ENCODE measurements at regions of chr3 and their contacts with region 1.

Region 1: GRCh38 chr3:49093853-49094767 is at the start of gene QRICH1:
- DNase-seq: peak; percentile 91 to 96
- H3K4me3 ChIP-seq: peak within 1 kb of the TSS; percentile 80 to 99 (median 89)
- H3K27ac ChIP-seq: peak within 1 kb of the TSS; percentile 88
- H3K4me1 ChIP-seq: no peaks in the 10 kb centered on the region; a peak in 1 of 7 replicates
- H3K27me3 ChIP-seq: no peaks in the 10 kb centered on the region
- CTCF ChIP-seq: peak; percentile 61 to 78 (median 65)
- EP300 ChIP-seq: no peak
- POLR2A ChIP-seq: peak; percentile 87 to 89
- RAD21 ChIP-seq: peak; percentile 47 to 59; a peak in 3 of 4 replicates
- total RNA-seq, gene QRICH1: 123 and 142 TPM in 2 replicates

Region 2: DNA sequence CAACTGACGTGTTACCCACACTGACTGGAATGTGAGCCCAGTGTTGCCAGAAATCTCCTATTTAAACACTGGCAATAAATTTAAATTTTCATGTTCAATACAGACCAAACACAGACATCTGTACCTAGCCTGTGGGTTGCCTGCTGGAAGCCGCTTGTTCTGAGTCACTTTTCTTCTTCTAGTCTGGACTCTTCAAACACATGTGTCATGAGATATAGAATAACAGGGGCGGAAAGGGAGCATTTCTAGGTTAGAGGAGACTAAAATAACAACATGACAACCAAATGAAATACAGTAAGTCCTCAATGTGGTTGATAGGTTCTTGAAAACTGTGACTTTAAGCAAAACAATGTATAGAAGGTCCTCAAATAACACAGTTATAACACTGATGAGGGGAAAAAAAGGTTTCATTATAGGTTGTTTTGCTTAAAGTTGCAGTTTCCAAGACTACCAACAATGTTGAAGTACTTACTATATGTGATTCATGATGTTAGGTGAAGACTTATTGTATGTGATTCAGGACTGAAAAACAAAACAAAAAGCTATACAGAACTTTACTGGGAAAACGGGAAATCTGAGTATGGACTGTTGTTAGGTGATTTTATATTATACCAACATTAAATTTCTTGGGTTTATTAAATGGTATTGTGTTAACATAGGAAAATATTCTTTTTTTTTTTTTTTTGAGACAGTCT is 309.5 kb before region 1 on chr3:
- CTCF ChIA-PET with region 1: no interaction called
- POLR2A ChIA-PET with region 1: no interaction called
- DNase-seq: no peak
- H3K4me3 ChIP-seq: no peak overlapping the region
- H3K27ac ChIP-seq: no peak overlapping the region
- H3K4me1 ChIP-seq: no peaks in the 10 kb centered on the region
- H3K27me3 ChIP-seq: no peaks in the 10 kb centered on the region
- CTCF ChIP-seq: no peak
- EP300 ChIP-seq: no peak
- POLR2A ChIP-seq: no peak
- RAD21 ChIP-seq: no peak

Region 3: DNA sequence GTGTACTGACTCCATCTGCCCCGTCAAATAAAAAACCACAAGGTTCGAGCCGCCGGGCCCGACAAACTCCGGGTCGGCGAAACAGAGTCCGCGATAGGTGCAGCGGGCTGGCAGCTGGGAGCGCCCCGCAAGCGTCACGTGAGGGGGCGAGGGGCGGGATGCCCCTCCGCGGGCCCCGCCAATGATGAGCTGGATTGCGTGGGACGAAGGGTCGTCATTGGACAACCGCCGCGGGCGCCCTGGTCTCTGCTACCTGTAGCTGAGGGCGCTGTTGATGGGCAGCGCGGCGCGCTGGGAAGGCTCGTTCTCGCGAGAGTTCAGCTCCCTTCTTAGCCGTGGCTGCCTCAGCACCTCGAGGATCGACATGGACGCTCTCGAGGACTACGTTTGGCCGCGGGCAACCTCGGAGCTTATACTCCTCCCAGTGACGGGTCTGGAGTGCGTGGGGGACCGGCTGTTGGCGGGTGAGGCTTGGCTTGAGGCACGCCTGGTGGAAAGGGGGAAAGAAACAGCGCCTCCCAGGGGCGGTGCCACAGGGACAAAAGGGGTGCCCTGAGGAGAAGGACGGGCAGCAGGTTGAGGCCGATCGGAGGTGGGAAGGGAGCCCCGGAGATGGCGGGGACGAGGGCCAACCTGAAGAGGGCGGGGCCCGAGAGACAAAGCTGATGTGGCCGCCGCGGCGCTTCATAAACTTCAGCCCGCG is 86.9 kb before region 1 on chr3 and contains the start of gene WDR6:
- CTCF ChIA-PET with region 1: no interaction called
- POLR2A ChIA-PET with region 1: interaction called, 141 read pairs
- DNase-seq: peak; percentile 96
- H3K4me3 ChIP-seq: peak within 1 kb of the TSS; percentile 66 to 94 (median 92)
- H3K27ac ChIP-seq: peak within 1 kb of the TSS; percentile 99
- H3K4me1 ChIP-seq: peaks cover 0 to 12% (median 6%) of the 10 kb centered on the region in 4 experiments; a peak in 5 of 7 replicates
- H3K27me3 ChIP-seq: no peaks in the 10 kb centered on the region
- CTCF ChIP-seq: peak in 1 of 3 experiments; percentile 34; a peak in 2 of 4 replicates
- EP300 ChIP-seq: no peak
- POLR2A ChIP-seq: peak in 1 of 2 experiments; percentile 95; a peak in 2 of 3 replicates
- RAD21 ChIP-seq: no peak
- total RNA-seq, gene WDR6: 180 and 187 TPM in 2 replicates

Region 4: GRCh38 chr3:49028673-49029562 is 65.2 kb before region 1 on chr3 and contains the start of gene IMPDH2:
- CTCF ChIA-PET with region 1: interaction called, 18 read pairs
- POLR2A ChIA-PET with region 1: interaction called, 141 read pairs
- DNase-seq: peak; percentile 79 to 97
- H3K4me3 ChIP-seq: peak within 1 kb of the TSS; percentile 50 to 81 (median 76)
- H3K27ac ChIP-seq: peak within 1 kb of the TSS; percentile 82
- H3K4me1 ChIP-seq: peaks cover 0 to 8% (median 6%) of the 10 kb centered on the region in 4 experiments; a peak in 5 of 7 replicates
- H3K27me3 ChIP-seq: no peaks in the 10 kb centered on the region; a peak in 1 of 7 replicates
- CTCF ChIP-seq: 0 out of 4 replicates have a peak, but pooled peaks of 1 of the 3 experiments have one; percentile 1
- EP300 ChIP-seq: no peak; a peak in 1 of 3 replicates
- POLR2A ChIP-seq: peak in 1 of 2 experiments; percentile 98; a peak in 2 of 3 replicates
- RAD21 ChIP-seq: peak in 1 of 2 experiments; percentile 16; a peak in 1 of 4 replicates
- total RNA-seq, gene IMPDH2: 409 and 419 TPM in 2 replicates

Region 5: GRCh38 chr3:49104483-49105291 is 10.6 kb after region 1 on chr3 and contains the start of gene QARS1:
- CTCF ChIA-PET with region 1: interaction called, 34 read pairs
- POLR2A ChIA-PET with region 1: interaction called, 508 read pairs
- DNase-seq: peak; percentile 81 to 96
- H3K4me3 ChIP-seq: peak within 1 kb of the TSS; percentile 82 to 87 (median 84)
- H3K27ac ChIP-seq: peak within 1 kb of the TSS; percentile 96
- H3K4me1 ChIP-seq: peaks cover 0 to 9% (median 3%) of the 10 kb centered on the region in 4 experiments; a peak in 5 of 7 replicates
- H3K27me3 ChIP-seq: no peaks in the 10 kb centered on the region
- CTCF ChIP-seq: no peak
- EP300 ChIP-seq: peak in 1 of 2 experiments; percentile 44; a peak in 1 of 3 replicates
- POLR2A ChIP-seq: peak; percentile 74 to 91
- RAD21 ChIP-seq: no peak
- total RNA-seq, gene QARS1: 346 and 353 TPM in 2 replicates

Region 6: GRCh38 chr3:49158108-49158709 is 64.1 kb after region 1 on chr3:
- CTCF ChIA-PET with region 1: interaction called, 17 read pairs
- POLR2A ChIA-PET with region 1: interaction called, 4 read pairs
- DNase-seq: peak in 1 of 2 experiments; percentile 75
- H3K4me3 ChIP-seq: no peak overlapping the region
- H3K27ac ChIP-seq: no peak overlapping the region
- H3K4me1 ChIP-seq: no peaks in the 10 kb centered on the region
- H3K27me3 ChIP-seq: no peaks in the 10 kb centered on the region
- CTCF ChIP-seq: peak in 2 of 3 experiments; percentile 66 to 84; a peak in 3 of 4 replicates
- EP300 ChIP-seq: no peak
- POLR2A ChIP-seq: no peak
- RAD21 ChIP-seq: peak; percentile 77 to 86

Measured in H1 (cell line).